ENCODE measurements at regions of chr7 and their contacts with region 1.

Region 1: DNA sequence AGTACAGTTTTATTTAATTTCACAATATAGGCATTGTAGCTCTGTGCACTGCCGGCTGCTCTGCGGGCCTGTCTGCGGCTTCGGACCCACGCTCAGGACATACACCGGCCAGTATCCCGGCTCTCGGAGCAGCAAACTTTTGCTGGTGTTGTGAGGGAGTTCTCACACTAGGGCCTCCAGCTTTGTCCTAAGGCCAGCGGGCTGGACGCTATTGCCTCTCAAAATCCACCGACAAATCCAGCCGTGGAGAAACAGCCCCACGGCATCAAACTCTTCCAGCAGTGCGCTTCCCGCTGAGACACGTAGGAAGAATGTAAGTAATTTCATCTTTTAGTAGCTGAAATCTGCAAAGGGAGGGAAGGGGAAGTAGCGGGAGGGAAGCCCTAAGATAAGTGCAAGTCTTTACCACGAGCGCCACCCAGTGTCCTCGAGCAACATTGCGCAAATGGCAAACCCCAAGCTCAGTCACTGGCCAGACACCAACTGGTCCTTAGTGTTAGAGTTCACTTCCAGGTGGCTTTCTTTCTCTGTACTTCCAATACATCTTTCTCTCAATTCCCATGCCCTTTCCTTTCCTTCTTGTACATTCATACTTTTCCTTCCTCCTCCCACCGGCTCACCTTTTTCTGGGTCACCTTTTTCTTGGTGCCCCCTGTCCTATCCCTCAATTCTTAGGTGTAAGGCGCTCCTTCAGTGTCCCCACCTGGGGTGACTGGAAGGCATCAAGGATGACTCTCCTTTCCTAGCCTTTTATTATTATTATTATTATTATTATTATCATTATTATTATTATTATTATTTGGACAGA is 3.0 kb upstream of the DLX5 start:
- DNase-seq: peak; percentile 36 to 86 (median 80)
- H3K4me3 ChIP-seq: peak overlapping the region; percentile 30 to 74 (median 53)
- H3K27ac ChIP-seq: peak overlapping the region in 1 of 59 donors; percentile 18
- H3K27me3 ChIP-seq: peaks cover 7 to 51% (median 41%) of the 10 kb centered on the region in 45 donors
- CTCF ChIP-seq: peak; percentile 74 to 97 (median 92)

Region 2: GRCh38 chr7:95723592-95724180 is 1303.9 kb before region 1 on chr7:
- intact Hi-C with region 1: loop called in 1 of 2 experiments (anchors 10 kb)
- DNase-seq: peak in 4 of 10 donors; percentile 14 to 62 (median 42)
- H3K4me3 ChIP-seq: no peak overlapping the region
- H3K27ac ChIP-seq: no peak overlapping the region
- H3K27me3 ChIP-seq: no peaks in the 10 kb centered on the region
- CTCF ChIP-seq: peak in 55 of 56 donors; percentile 34 to 81 (median 64)

Region 3: GRCh38 chr7:95916573-95917297 is 1110.9 kb before region 1 on chr7:
- intact Hi-C with region 1: loop called (anchors 2 to 5 kb)
- DNase-seq: peak; percentile 77 to 93 (median 86)
- H3K4me3 ChIP-seq: peak overlapping the region in 24 of 59 donors; percentile 0 to 43 (median 26)
- H3K27ac ChIP-seq: peak overlapping the region in 1 of 59 donors; percentile 28
- H3K27me3 ChIP-seq: no peaks in the 10 kb centered on the region
- CTCF ChIP-seq: peak; percentile 88 to 98 (median 96)

Region 4: DNA sequence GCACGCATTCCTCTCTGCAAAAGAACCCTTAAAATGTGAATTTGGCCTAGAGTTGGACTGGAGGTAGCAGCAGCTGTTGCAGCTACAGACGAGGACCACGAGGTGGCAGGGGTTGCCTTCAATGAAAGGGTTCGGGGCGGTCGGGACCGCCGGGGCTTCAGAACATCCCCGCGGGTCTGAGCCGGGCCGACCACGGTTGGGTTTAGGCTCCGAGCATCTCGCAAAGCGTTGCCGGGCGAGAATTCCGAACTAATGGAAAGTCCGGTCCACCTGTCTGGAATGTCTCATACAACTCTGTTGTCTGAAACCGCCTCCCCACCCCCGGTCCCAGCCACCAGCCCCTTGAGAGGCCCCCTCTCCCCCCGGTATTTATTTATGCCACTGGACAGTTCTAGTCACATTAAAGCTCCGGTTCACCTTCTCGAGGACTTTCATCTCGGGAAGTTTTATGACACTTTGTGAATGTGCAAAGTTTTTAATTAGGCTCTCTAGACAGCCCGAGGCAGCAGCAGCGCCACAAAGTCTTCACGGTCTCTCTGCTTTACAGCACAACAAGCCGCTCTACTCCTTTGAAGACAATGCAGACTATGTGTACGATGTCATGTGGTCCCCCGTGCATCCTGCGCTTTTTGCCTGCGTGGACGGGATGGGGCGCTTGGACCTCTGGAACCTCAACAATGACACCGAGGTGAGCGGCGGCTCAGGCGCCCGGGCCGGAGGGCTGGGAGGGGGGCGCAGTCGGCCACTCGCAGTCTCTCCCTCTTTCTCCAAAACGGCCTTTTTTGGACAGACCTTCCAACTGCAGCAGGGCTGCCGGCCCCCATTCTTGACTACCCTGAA is 951.9 kb before region 1 on chr7:
- intact Hi-C with region 1: loop called (anchors 1 to 5 kb)
- DNase-seq: peak; percentile 58 to 76 (median 64)
- H3K4me3 ChIP-seq: peak overlapping the region; percentile 11 to 81 (median 61)
- H3K27ac ChIP-seq: peak overlapping the region in 3 of 59 donors; percentile 19 to 52 (median 37)
- H3K27me3 ChIP-seq: peaks cover 0 to 4% (median 0%) of the 10 kb centered on the region in 45 donors
- CTCF ChIP-seq: peak; percentile 52 to 92 (median 84)

Region 5: GRCh38 chr7:96321658-96322372 is 705.8 kb before region 1 on chr7 and contains the start of gene SLC25A13:
- intact Hi-C with region 1: loop called in 1 of 2 experiments (anchors 10 kb)
- DNase-seq: peak; percentile 84 to 96 (median 92)
- H3K4me3 ChIP-seq: peak within 1 kb of the TSS; percentile 68 to 99 (median 93)
- H3K27ac ChIP-seq: peak within 1 kb of the TSS; percentile 66 to 99 (median 96)
- H3K27me3 ChIP-seq: no peaks in the 10 kb centered on the region
- CTCF ChIP-seq: peak in 22 of 56 donors; percentile 10 to 44 (median 29)
- total RNA-seq, gene SLC25A13: 8.6 to 61.9 (median 21.0) TPM

Region 6: GRCh38 chr7:96414931-96415292 is 612.7 kb before region 1 on chr7:
- intact Hi-C with region 1: loop called (anchors 2 to 10 kb)
- DNase-seq: peak in 3 of 10 donors; percentile 16 to 68 (median 41)
- H3K4me3 ChIP-seq: no peak overlapping the region
- H3K27ac ChIP-seq: no peak overlapping the region
- H3K27me3 ChIP-seq: no peaks in the 10 kb centered on the region
- CTCF ChIP-seq: peak in 55 of 56 donors; percentile 25 to 78 (median 63)